ENCODE measurements at regions of chr6 and their contacts with region 1.

Region 1: GRCh38 chr6:111709615-111710398 is 104.1 kb upstream of the TRAF3IP2 start:
- DNase-seq: peak; percentile 73
- H3K4me3 Mint-ChIP-seq: no peak overlapping the region
- H3K27ac Mint-ChIP-seq: peak overlapping the region; percentile 82
- H3K4me1 Mint-ChIP-seq: peaks cover 53% of the 10 kb centered on the region
- H3K27me3 Mint-ChIP-seq: no peaks in the 10 kb centered on the region

Region 2: GRCh38 chr6:110873981-110874879 is 835.6 kb before region 1 on chr6 and contains the start of gene AMD1:
- CTCF ChIA-PET with region 1: no interaction called
- intact Hi-C with region 1: no loop called
- DNase-seq: peak; percentile 94
- H3K4me3 Mint-ChIP-seq: peak within 1 kb of the TSS; percentile 95
- H3K27ac Mint-ChIP-seq: peak within 1 kb of the TSS; percentile 95
- H3K4me1 Mint-ChIP-seq: peaks cover 29% of the 10 kb centered on the region
- H3K27me3 Mint-ChIP-seq: no peaks in the 10 kb centered on the region
- total RNA-seq, gene AMD1: 72.6 to 75.3 TPM

Region 3: GRCh38 chr6:111183702-111184517 is 525.9 kb before region 1 on chr6:
- CTCF ChIA-PET with region 1: no interaction called
- intact Hi-C with region 1: no loop called
- DNase-seq: no peak
- H3K4me3 Mint-ChIP-seq: no peak overlapping the region
- H3K27ac Mint-ChIP-seq: no peak overlapping the region
- H3K4me1 Mint-ChIP-seq: peaks cover 10% of the 10 kb centered on the region
- H3K27me3 Mint-ChIP-seq: no peaks in the 10 kb centered on the region

Region 4: DNA sequence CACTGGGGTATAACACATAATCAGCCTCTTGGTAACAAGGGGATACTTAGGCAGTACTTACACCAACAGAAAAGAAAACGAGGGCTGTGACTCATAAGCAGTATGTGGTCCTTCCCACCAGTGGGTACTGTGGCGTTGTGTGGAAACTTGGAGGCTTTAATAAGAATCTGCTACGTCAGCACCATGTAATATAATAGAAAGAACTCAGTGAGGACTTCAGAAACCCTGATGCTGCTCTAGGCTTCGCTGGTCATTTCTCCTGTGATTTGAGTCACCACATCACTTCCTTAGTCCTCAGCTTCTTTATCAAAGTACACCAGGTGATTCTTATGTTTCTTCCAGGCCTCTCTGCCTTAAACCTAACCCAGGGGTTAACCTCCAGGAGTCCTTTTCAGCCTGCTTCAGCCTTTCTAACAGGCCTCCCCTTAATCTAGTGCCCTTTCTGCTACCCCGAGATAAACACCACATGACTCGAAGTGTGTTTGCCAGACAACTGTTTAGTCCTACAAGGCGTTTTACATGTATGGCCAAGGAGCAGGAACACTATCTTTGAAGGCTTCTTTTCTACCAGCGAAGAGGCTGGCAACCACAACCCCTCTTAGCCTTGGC is 94.9 kb after region 1 on chr6:
- CTCF ChIA-PET with region 1: interaction called, 4 read pairs
- intact Hi-C with region 1: loop called (anchors 2 kb)
- DNase-seq: peak; percentile 74
- H3K4me3 Mint-ChIP-seq: peak overlapping the region; percentile 5
- H3K27ac Mint-ChIP-seq: peak overlapping the region; percentile 92
- H3K4me1 Mint-ChIP-seq: peaks cover 92% of the 10 kb centered on the region
- H3K27me3 Mint-ChIP-seq: no peaks in the 10 kb centered on the region

Region 5: GRCh38 chr6:111997078-111997852 is 287.5 kb after region 1 on chr6:
- CTCF ChIA-PET with region 1: interaction called, 56 read pairs
- intact Hi-C with region 1: loop called (anchors 1 kb)
- DNase-seq: peak; percentile 89
- H3K4me3 Mint-ChIP-seq: peak overlapping the region; percentile 53
- H3K27ac Mint-ChIP-seq: peak overlapping the region; percentile 65
- H3K4me1 Mint-ChIP-seq: peaks cover 47% of the 10 kb centered on the region
- H3K27me3 Mint-ChIP-seq: no peaks in the 10 kb centered on the region

Region 6: DNA sequence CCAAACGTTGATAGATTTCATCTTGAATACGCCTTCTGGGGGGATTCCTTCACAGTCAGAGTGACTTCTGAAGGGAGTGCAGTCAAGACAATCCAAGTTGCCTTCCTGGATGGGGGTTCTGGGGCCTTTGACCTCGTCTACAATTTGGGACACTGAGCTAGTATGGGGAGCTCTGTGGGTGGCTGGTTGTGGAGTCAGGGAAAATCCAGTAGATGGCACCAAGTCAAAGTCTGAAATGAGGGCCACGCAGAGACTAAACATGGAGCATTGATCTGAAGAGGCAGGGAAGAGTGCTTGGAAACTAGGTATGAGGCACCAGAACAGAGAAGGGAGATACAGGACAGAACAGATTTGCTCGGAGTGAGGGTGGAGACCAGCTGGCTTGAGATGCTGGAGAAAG is 300.5 kb after region 1 on chr6:
- CTCF ChIA-PET with region 1: interaction called, 15 read pairs
- intact Hi-C with region 1: no loop called
- DNase-seq: peak; percentile 65
- H3K4me3 Mint-ChIP-seq: no peak overlapping the region
- H3K27ac Mint-ChIP-seq: no peak overlapping the region
- H3K4me1 Mint-ChIP-seq: peaks cover 40% of the 10 kb centered on the region
- H3K27me3 Mint-ChIP-seq: no peaks in the 10 kb centered on the region

Region 7: GRCh38 chr6:112029045-112029822 is 319.4 kb after region 1 on chr6:
- CTCF ChIA-PET with region 1: interaction called, 15 read pairs
- intact Hi-C with region 1: loop called (anchors 1 kb)
- DNase-seq: peak; percentile 91
- H3K4me3 Mint-ChIP-seq: no peak overlapping the region
- H3K27ac Mint-ChIP-seq: peak overlapping the region; percentile 90
- H3K4me1 Mint-ChIP-seq: peaks cover 81% of the 10 kb centered on the region
- H3K27me3 Mint-ChIP-seq: no peaks in the 10 kb centered on the region

Region 8: GRCh38 chr6:112037783-112038216 is 328.0 kb after region 1 on chr6:
- CTCF ChIA-PET with region 1: interaction called, 38 read pairs
- intact Hi-C with region 1: no loop called
- DNase-seq: peak; percentile 43
- H3K4me3 Mint-ChIP-seq: no peak overlapping the region
- H3K27ac Mint-ChIP-seq: no peak overlapping the region
- H3K4me1 Mint-ChIP-seq: peaks cover 77% of the 10 kb centered on the region
- H3K27me3 Mint-ChIP-seq: no peaks in the 10 kb centered on the region

Region 9: DNA sequence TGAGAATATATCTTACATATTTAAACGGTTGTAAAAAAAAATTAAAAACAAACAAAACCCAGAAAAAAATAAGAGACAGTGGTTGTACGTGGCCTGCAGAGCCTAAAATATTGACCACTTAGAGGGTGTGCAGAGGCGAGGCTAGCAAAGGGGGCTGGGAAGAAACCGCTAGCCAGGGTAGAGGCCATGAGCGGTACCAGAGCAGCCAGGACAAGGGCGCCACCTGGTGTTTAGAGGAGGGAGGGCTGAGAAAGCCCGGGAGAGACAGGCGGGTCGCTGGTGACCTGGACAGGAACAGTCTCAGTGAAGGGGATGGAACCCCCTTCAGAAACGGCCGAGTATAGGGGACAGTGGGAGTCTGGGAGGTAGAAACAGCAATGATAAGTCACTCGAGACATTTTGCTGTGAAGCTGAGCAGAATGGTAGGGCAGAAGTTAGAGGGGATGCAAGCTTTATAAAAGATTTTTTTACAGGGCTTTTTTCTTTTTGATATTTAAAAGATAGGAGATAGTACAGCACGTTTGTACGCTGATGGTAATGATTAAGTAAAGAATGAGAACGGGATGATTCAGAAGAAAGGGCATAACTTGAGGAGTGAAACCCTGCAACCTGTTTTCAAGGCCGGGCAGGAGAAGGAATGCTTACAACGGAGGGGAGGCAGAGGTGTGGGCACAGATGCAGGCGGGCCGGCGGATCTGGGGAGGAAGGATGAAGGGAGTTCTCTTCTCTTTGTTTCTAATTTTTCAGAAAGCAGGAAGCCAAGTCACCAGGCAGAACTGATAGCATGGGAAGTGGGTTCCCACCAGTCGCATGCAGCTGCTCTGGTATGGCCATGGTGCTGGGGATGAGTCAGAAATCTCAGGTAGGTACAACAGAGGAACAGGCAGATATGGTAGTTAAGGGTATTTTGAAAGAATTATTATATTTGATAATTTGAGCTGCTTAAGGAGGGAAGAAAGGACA is 453.8 kb after region 1 on chr6:
- CTCF ChIA-PET with region 1: interaction called, 3 read pairs
- intact Hi-C with region 1: loop called (anchors 2 kb)
- DNase-seq: peak; percentile 91
- H3K4me3 Mint-ChIP-seq: peak overlapping the region; percentile 61
- H3K27ac Mint-ChIP-seq: peak overlapping the region; percentile 37
- H3K4me1 Mint-ChIP-seq: peaks cover 12% of the 10 kb centered on the region
- H3K27me3 Mint-ChIP-seq: peaks cover 6% of the 10 kb centered on the region